ENCODE measurements at regions of chr15 and their contacts with region 1.

Region 1: DNA sequence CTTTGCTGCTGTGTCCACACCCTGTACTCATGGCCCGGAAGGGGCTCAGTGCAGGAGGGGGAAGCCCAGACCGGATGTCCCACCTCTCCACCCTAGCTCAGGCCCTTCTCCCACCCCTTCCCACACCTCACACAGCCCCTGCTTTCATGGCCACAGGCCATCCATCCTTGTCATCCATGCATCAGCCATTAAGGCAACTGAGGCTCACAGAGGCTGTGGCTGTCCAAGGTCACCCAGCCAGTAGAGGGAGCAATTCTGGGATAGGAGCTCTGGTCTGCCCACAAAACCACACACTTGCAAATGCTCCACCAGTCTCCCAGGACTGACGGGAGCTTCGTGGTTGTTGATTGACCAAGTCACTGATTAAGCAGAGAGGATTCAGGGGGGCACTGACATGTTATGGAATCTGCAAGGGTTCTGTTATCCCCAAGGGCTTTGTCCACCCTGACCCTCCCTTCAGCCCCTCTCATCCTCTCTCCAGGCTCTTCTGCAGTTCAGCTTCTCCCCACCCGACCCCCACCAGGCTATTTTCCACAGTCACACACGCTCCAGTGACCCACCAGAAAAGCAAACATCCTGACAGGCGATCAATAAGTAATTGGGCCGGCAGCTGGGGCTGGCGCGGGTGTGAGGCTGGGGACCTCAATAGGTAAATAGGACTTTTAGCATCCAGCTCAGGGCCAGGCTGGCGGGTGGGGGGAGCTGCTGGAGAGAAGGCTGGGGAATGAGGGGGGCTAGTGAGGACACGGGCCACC is 15.1 kb downstream of the LINGO1 start:
- H3K4me3 ChIP-seq: no peak overlapping the region
- H3K27ac ChIP-seq: no peak overlapping the region
- H3K4me1 ChIP-seq: no peaks in the 10 kb centered on the region
- CTCF ChIP-seq: 0 out of 2 replicates have a peak, but pooled peaks have one; percentile 43

Region 2: DNA sequence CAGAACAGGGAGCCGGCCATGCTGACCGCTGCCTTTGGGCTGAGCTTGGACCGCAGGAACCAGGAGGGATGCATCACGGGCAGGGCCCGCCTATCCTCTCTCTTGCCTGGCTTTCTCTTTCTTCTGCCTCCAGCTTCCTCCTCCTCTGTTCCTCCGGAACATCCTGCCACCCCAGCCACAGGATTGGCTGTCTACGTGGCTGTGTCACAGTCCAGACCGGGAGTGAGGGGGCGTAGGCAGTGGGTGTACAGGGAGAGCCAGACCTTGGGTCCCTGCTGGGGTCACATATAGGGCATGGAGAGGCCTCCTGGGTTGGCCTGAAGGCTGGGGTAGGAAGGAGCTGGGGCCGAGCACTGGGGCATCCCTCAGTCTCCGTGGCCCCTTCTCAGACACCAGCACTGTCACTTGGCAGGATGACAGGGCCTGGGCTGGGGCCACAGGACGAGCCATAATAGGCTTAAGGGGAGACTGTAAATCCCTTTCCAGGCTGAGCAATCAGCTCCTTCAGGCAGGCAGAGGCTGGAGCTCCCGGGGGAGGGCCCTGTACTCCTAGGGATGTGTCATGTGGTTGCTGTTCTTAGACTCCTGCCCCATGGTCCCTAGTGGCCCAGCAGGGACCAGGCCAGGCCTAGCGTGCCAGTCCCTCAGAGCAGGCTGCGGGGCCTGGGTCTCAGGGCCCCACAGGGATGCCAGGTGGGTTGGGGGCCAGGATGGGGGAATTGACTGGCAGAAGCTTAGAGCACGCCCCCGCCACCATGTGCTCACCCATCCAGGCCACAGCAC is 10.4 kb before region 1 on chr15:
- CTCF ChIA-PET with region 1: interaction called, 55 read pairs
- POLR2A ChIA-PET with region 1: interaction called, 3 read pairs
- H3K4me3 ChIP-seq: no peak overlapping the region
- H3K27ac ChIP-seq: no peak overlapping the region; the same call in 1 of the 2 replicates
- H3K4me1 ChIP-seq: peaks cover 6% of the 10 kb centered on the region; the same call in 1 of the 2 replicates
- CTCF ChIP-seq: 0 out of 2 replicates have a peak, but pooled peaks have one; percentile 8

Region 3: DNA sequence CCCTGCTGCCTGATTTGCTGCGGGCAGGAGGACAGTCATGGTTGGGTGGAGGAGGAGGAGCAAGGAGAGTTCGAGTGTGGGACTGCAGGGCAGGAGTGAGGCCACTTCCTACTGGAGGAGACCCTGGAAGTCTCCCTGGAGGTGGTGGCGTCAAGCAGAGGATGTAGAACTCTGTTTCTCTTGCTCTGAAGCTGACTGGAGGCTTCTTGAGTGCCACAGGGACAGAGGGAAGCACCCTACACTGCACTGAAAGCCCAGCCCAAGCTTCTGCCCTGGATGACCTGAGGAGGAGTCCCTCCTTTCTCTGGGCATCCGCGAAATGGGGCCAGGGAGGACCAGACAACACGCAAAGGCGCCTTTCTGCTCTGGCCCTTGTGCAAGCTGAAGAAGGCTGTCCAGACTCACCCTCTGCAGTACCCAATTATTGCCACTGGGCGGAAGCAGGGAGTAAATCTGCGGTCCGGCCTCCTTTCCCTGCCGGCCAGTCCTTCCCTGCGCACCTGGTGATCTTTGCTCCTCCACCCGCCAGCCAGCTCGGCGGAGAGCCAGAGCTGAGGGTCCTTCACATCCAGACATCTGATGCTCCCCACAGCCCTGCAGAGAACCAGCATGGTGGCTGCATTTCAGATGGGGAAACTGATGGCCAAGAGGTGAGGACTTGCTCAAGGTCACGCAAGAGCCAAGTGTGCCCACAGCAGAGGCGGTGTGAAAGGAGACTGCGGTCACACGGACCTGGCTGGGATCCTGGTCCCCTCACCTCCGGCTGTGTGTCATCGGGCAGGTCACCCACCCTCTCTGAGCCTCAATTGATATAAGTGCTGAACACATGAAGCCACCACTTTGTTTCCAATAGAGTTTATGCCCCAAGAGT is 252.8 kb after region 1 on chr15:
- CTCF ChIA-PET with region 1: interaction called, 11 read pairs
- POLR2A ChIA-PET with region 1: no interaction called
- H3K4me3 ChIP-seq: no peak overlapping the region
- H3K27ac ChIP-seq: no peak overlapping the region
- H3K4me1 ChIP-seq: 0 out of 2 replicates have a peak, but pooled peaks cover 2% of the 10 kb centered on the region
- CTCF ChIP-seq: peak; percentile 71

Measured in HEK293 (cell line).